ENCODE measurements at regions of chr2 and their contacts with region 1.

Region 1: GRCh38 chr2:68185541-68186164 is 28.0 kb downstream of the PNO1 start:
- DNase-seq: peak; percentile 60
- ATAC-seq: peak; percentile 68
- H3K4me3 Mint-ChIP-seq: no peak overlapping the region
- H3K27ac Mint-ChIP-seq: peak overlapping the region; percentile 43
- H3K4me1 Mint-ChIP-seq: peaks cover 24% of the 10 kb centered on the region
- H3K27me3 Mint-ChIP-seq: no peaks in the 10 kb centered on the region

Region 2: GRCh38 chr2:67895227-67895941 is 290.3 kb before region 1 on chr2:
- CTCF ChIA-PET with region 1: no interaction called
- DNase-seq: no peak
- ATAC-seq: no peak
- H3K4me3 Mint-ChIP-seq: no peak overlapping the region
- H3K27ac Mint-ChIP-seq: no peak overlapping the region
- H3K4me1 Mint-ChIP-seq: no peaks in the 10 kb centered on the region
- H3K27me3 Mint-ChIP-seq: no peaks in the 10 kb centered on the region

Region 3: GRCh38 chr2:68157402-68158133 is 28.1 kb before region 1 on chr2 and contains the start of gene PNO1:
- CTCF ChIA-PET with region 1: interaction called, 12 read pairs
- DNase-seq: peak; percentile 98
- ATAC-seq: peak; percentile 91
- H3K4me3 Mint-ChIP-seq: peak within 1 kb of the TSS; percentile 92
- H3K27ac Mint-ChIP-seq: peak within 1 kb of the TSS; percentile 98
- H3K4me1 Mint-ChIP-seq: peaks cover 39% of the 10 kb centered on the region
- H3K27me3 Mint-ChIP-seq: no peaks in the 10 kb centered on the region
- total RNA-seq, gene PNO1: 10.5 to 15.1 TPM

Region 4: DNA sequence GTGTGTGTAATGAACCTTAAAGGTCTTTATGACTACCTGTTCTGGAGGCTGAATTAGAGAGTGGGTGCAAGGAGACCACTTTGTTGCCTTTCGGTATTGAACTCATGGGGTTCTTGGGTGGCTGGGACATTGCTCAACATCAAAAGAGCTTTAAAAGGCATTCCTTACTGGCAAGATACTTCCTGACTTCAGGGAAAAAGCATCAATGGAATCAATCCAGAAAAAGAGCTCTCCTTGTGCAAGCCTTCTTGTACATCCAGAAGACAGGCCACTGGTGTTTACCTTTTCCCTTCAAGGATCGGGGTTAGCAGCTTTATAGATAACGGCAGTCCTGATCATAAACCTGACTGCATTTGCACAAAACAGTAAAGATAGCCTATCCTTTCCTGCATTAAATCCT is 18.5 kb before region 1 on chr2:
- CTCF ChIA-PET with region 1: interaction called, 11 read pairs
- DNase-seq: no peak
- ATAC-seq: no peak
- H3K4me3 Mint-ChIP-seq: no peak overlapping the region
- H3K27ac Mint-ChIP-seq: peak overlapping the region; percentile 16
- H3K4me1 Mint-ChIP-seq: no peaks in the 10 kb centered on the region
- H3K27me3 Mint-ChIP-seq: no peaks in the 10 kb centered on the region

Region 5: GRCh38 chr2:68282811-68283418 is 97.3 kb after region 1 on chr2:
- CTCF ChIA-PET with region 1: interaction called, 12 read pairs
- DNase-seq: no peak
- ATAC-seq: peak; percentile 58
- H3K4me3 Mint-ChIP-seq: no peak overlapping the region
- H3K27ac Mint-ChIP-seq: no peak overlapping the region
- H3K4me1 Mint-ChIP-seq: peaks cover 9% of the 10 kb centered on the region
- H3K27me3 Mint-ChIP-seq: peaks cover 43% of the 10 kb centered on the region

Measured in activated CD8-positive, alpha-beta memory T cell treated with anti-CD3 and anti-CD28 coated beads, Interleukin-2, amount 10 ng/mL, durations not matched to agents 7 days and 5 days (primary cell).